Posterior cingulate gyrus (tissue), 11 donors: ENCODE measurements at regions of chr2 and their contacts with region 1.

Region 1: GRCh38 chr2:36785179-36785795 is 88.8 kb downstream of the VIT start:
- DNase-seq: peak in 6 of 10 donors; percentile 27 to 90 (median 58)

Region 2: GRCh38 chr2:36918307-36918706 is 133.0 kb after region 1 on chr2:
- intact Hi-C with region 1: loop called (anchors 5 kb)
- DNase-seq: no peak

Region 3: GRCh38 chr2:36965751-36966369 is 180.6 kb after region 1 on chr2:
- intact Hi-C with region 1: no loop called
- DNase-seq: peak in 3 of 10 donors; percentile 9 to 84 (median 11)

Region 4: GRCh38 chr2:37005118-37005868 is 220.0 kb after region 1 on chr2:
- intact Hi-C with region 1: loop called (anchors 2 kb)
- DNase-seq: no peak

Region 5: DNA sequence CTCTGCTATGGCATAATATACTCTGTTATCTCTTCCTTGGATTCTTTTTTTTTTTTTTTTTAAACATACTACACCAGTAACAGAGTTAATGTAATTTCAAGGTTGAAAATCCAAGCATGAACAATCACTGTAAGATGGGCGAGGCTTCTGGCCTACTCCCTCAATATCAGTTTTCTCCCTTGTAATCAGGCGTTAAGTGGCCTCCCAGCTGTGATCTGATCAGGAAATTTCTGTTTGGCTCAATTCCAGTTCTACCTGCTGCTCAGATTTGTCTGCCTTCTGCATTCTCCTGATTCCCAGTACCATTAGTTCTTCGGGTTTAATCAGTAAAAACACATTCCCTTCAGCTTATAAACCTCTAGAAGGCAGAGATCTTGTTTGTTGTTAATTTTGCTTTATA is 520.7 kb after region 1 on chr2:
- intact Hi-C with region 1: no loop called
- DNase-seq: no peak